ENCODE measurements at regions of chr12 and their contacts with region 1.

Region 1: GRCh38 chr12:98939350-98939749 is 294.3 kb downstream of the APAF1 start:
- DNase-seq: peak; percentile 70
- H3K4me3 ChIP-seq: no peak overlapping the region
- CTCF ChIP-seq: peak; percentile 85

Region 2: DNA sequence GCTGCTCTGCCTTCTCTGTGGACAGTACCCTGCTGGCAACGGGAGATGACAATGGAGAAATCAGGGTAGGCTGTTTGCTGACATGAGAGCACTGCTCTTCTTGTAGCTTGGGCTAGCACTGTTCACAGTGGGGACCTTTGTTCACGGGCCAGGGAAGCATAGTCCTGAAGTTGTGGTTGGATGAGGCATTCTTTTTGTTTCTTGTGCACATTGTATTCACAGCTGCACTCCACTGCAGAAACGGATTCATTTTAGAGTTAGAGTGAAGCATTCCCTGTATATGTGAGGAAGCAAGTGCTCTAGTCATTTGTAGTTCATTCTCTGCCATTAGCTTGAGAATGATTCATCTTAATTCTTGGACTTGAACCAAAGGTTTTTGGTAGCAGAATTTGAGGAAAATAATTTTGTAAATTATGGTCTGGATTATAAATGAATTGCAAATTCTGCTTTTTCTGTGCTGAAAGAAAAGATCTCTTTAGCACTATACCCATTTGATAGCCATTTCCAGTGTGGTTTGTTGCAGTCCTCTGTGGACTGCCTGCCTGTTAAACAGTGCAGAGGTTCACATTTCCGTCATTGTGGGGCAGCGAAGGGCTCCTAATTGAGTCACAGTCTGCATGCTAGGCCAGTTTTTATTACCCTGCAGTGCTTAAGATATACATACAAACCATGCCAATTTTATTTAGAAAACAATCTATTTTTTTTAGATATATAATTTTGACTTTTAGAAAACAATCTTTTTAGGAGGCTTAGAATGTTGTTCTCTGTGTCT is 213.7 kb before region 1 on chr12:
- in situ Hi-C with region 1: loop called (anchors 25 kb)
- DNase-seq: peak; percentile 74
- H3K4me3 ChIP-seq: no peak overlapping the region
- CTCF ChIP-seq: peak; percentile 76

Region 3: DNA sequence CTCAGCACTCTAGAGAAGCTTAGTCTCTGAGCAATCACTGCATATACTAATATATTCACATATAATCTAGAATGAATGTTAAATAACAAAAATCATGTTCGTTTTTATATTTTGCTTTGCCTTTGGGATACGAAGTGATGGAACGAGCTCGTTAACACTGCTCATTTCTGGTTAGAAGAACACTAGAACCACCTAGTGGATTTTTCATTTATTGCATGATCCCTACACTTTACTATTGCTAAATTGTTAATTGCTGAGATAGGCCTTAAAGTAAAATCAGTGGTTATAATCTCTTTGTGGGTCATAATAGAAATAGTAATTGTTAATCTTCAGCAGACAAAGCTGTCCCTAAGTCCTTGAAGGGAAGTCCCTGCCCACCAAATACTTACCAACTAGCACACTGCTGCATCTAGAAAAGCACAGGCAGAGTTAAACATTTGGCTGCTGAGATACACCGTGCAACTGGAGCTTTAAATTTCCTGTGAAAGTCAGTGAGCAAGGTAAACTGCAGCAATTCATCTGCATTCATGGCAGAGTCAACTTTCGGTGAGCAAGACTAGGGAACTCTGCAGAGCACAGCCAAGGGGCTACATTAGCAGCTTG is 59.4 kb after region 1 on chr12:
- in situ Hi-C with region 1: loop called (anchors 5 kb)
- DNase-seq: peak; percentile 29
- H3K4me3 ChIP-seq: no peak overlapping the region
- CTCF ChIP-seq: peak; percentile 63

Region 4: DNA sequence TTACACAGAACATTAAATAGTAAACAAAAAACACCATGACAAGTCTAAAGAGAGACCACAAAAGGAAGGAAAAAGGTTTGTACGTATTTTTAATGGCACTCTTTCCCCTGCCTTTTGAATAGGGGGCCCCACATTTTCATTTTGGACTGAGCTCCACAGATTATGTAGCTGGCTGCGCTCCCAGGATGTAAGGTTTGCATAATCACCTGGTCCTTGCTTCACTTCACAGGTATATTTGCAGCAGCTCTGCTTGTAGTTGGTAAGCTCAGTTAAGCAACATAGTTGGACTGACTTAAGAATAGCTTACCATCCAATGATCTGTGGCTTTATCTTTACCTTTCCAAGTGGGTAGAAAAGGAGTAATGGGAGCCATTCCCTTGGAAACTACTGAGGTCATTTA is 160.4 kb after region 1 on chr12:
- in situ Hi-C with region 1: no loop called
- DNase-seq: no peak
- H3K4me3 ChIP-seq: no peak overlapping the region
- CTCF ChIP-seq: no peak